ENCODE measurements at regions of chr3 and their contacts with region 1.

Region 1: DNA sequence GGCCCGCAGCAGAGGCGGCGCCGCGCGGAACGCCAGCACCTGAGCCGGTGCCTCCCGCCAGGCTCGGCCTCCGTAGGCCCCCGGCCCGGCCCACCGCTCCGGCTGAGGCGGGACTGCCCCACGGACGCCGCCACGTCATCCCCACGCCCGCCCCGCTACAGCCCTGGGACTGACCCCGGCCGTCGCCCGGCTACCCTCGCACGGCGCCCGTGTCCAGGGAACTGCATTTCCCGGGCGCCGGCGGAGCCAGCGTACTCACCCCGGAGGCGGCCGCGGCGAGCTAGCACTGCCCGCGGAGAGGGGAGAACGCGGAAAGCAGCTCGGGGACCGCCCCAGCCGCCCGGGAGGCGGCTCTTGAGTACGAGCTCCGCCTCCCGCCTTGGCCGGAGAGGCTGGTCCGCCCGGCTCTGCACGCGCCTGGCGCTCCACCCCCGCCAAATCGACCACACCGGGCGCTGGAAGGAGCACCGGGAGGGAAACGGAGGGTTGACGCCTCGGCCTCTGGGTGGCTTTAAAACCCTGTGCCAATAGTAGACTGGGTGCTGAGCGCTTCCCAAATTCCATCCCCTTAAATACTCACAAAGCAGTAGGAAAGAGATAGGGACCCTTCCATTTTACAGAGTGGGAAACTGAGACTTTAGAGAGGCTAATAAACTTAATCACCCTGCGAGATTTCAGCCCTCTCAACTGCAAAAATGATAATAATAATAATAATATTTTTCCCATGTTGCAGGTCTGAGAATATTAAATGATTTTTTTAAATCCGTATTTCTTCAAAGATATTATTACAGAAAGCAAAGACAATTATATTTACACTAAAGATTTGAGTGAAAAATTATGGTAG is at the start of gene B4GALT4:
- DNase-seq: peak; percentile 92
- CTCF ChIP-seq: no peak

Region 2: GRCh38 chr3:117997201-117998049 is 1243.4 kb before region 1 on chr3:
- CTCF ChIA-PET with region 1: no interaction called
- POLR2A ChIA-PET with region 1: interaction called, 11 read pairs
- DNase-seq: peak; percentile 69
- CTCF ChIP-seq: peak; percentile 93

Region 3: GRCh38 chr3:118425272-118425837 is 815.5 kb before region 1 on chr3:
- CTCF ChIA-PET with region 1: no interaction called
- POLR2A ChIA-PET with region 1: no interaction called
- DNase-seq: no peak
- CTCF ChIP-seq: no peak

Region 4: DNA sequence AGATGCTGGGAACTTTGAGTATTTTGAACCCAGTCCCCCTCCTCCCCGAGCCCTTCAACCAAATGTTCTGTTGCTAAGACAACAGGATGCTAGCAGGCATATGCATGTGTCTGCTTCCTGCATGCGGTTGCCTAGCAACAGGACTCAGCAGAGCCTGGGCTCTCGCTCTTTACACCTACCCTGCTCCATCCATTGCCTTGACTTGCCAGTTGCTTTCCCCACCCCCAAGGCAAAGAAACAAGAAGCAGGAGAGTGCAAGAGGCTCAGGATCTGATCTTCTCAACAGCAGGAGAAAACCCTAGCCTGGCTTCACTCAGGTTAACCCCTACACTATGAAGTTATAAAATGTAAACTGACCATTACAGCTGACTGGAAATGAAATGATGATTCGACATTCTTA is 599.2 kb before region 1 on chr3:
- CTCF ChIA-PET with region 1: no interaction called
- POLR2A ChIA-PET with region 1: no interaction called
- DNase-seq: no peak
- CTCF ChIP-seq: no peak

Region 5: DNA sequence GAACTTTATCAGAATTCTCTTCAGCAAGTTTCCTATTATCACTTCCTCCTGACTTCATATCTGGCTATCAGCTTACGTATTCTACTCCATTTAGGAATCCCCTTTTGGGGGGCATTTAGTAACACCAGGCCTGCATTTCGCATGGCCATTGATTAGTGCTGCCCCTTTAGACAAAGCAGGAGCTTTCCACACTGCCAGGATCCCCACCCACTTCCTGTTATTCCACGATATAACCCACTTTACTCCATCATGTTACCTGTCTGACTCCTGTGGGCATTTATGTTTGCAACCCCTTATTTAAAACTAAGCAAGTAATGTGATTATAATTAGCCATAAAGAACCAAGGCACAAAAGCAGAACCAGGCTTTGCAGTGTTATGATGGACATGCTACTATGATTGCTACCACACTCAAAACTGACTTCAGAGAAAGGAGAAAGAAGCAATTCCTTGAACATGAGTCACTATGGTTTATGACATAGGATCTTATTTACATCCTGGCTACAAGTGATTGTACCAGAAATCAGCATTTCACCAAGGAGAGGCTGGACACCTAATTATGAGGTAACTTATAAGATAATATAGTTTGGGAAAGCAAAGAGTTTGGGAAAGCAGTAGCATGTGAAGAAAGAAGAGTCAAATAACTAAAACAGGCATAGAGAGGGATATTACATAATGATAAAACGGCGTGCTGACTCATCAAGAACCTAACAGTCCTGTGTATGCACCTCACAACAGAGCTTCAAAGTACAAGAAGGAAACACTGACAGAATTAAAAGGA is 302.4 kb before region 1 on chr3:
- CTCF ChIA-PET with region 1: no interaction called
- POLR2A ChIA-PET with region 1: no interaction called
- DNase-seq: no peak
- CTCF ChIP-seq: no peak

Region 6: DNA sequence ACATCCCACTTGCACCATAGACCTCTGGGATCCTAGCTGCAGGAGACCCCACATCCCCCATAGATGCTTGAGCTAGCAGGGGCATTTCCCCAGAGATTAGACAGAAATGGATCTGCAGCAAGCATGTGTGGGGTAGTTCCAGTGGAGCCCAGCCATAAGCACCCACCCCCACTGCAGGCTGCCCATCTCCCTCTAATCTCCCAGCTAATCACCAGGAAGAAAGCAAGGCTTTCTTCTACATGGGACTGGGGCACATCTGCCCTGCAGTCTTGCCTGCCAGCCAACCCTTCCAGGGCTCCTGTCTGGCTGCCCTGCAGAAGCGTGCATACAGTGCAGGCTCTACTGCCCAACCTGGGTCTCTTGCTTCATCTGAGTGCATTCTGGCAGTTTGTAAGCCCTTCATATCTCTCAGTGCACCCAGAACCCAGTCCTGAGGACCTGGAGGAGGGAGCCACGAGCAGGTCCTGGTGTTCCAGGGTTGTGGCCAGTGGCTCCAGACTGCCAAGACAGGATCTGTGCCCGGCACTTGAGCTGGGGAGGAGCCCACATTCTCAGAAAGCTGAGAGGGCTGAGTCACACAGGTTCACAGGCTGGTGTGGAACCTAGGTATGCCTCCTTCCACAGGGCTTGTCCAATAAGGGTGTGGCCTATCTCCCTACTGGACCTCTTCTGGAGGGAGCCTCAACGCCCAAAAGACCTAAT is 156.3 kb before region 1 on chr3:
- CTCF ChIA-PET with region 1: no interaction called
- POLR2A ChIA-PET with region 1: no interaction called
- DNase-seq: no peak
- CTCF ChIP-seq: no peak

Region 7: GRCh38 chr3:119219069-119219468 is 21.7 kb before region 1 on chr3:
- CTCF ChIA-PET with region 1: interaction called, 74 read pairs
- POLR2A ChIA-PET with region 1: no interaction called
- DNase-seq: peak; percentile 48
- CTCF ChIP-seq: no peak

Region 8: GRCh38 chr3:119257682-119258410 is 17.0 kb after region 1 on chr3:
- CTCF ChIA-PET with region 1: interaction called, 25 read pairs
- POLR2A ChIA-PET with region 1: interaction called, 3 read pairs
- DNase-seq: no peak
- CTCF ChIP-seq: no peak

Region 9: DNA sequence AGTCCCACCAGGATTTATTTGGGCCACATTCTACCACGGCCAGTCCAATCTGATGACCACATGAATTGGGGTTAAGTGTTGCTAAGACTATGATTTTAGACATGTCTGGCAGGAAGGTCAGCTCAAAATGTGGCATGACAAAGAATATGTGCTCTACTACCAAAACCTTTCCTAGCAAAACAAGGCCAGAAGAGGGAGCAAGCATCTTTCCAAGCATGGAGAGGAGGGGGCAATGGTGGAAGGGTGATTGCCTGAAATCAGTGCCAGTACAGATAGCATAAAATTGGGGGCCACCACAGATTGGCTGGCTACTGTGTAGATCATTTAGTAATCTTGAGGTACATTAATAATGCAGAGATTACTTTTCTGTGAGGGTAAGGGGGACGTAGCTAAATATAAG is 179.4 kb after region 1 on chr3:
- CTCF ChIA-PET with region 1: no interaction called
- POLR2A ChIA-PET with region 1: interaction called, 16 read pairs
- DNase-seq: no peak
- CTCF ChIP-seq: no peak

Measured in GM10248 (cell line).